H1 (cell line): ENCODE measurements at regions of chr20 and their contacts with region 1.

Region 1: DNA sequence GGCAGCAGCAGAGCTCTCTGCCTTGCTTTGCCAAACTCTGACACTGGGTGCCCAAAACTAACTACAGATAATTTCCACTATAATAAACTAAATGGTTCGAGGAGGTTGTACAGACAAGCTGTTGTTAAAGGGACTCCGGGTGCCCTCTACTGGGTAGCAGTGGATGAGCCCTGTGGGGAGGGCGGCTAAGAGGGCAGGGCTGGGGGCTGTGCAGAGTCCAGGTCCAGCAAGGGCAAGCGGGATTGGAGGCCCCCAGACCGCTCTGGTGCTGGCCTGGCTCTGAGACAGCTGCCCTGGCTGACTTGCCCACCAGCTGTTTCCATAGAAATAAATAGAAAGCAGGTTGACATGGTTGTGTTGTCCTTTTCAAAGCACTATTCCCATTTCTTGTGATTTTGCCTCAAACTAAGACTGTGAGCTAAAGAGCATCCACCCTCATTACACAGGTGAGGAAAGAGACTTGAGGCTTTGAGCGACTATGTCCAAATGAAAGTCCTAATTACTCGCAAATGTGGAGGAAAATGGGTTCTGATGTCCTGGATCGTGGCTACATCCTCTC is 167.6 kb upstream of the CST7 start:
- DNase-seq: peak in 1 of 2 experiments; percentile 55
- H3K4me3 ChIP-seq: no peak overlapping the region
- H3K27ac ChIP-seq: no peak overlapping the region
- H3K4me1 ChIP-seq: no peaks in the 10 kb centered on the region
- H3K27me3 ChIP-seq: no peaks in the 10 kb centered on the region
- CTCF ChIP-seq: peak; percentile 53 to 58 (median 57)
- EP300 ChIP-seq: no peak
- POLR2A ChIP-seq: no peak
- RAD21 ChIP-seq: peak; percentile 70 to 82

Region 2: GRCh38 chr20:24100385-24101011 is 681.0 kb before region 1 on chr20:
- CTCF ChIA-PET with region 1: interaction called, 10 read pairs
- POLR2A ChIA-PET with region 1: no interaction called
- DNase-seq: no peak
- H3K4me3 ChIP-seq: no peak overlapping the region
- H3K27ac ChIP-seq: no peak overlapping the region
- H3K4me1 ChIP-seq: no peaks in the 10 kb centered on the region
- H3K27me3 ChIP-seq: 0 out of 7 replicates have a peak, but pooled peaks cover 0 to 2% (median 0%) of the 10 kb centered on the region in 4 experiments
- CTCF ChIP-seq: peak; percentile 41 to 77 (median 66)
- EP300 ChIP-seq: no peak
- POLR2A ChIP-seq: no peak
- RAD21 ChIP-seq: peak; percentile 59 to 72

Region 3: DNA sequence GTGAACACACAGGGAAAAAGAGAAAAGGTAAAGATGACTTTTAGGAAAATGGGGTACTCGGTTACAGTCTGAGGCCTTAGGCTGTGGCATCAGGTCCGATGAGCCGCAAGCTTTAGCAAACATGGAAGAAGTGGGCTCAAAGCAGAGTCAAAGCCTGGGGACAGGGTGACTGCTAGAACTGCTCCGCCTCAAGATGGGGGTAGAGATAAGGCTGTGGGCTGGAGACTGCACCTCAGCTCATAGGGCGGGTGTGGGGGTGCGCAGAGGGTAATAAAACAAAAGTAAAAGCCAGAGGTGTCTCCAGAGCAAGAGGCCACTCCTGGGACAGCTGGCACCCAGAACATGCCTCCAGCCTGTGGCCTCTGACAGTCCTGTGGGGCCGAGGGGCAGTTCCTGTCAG is 333.3 kb before region 1 on chr20:
- CTCF ChIA-PET with region 1: interaction called, 13 read pairs
- POLR2A ChIA-PET with region 1: no interaction called
- DNase-seq: no peak
- H3K4me3 ChIP-seq: no peak overlapping the region
- H3K27ac ChIP-seq: no peak overlapping the region
- H3K4me1 ChIP-seq: peaks cover 8 to 24% (median 16%) of the 10 kb centered on the region in 4 experiments; a peak in 6 of 7 replicates
- H3K27me3 ChIP-seq: peaks cover 0 to 5% (median 0%) of the 10 kb centered on the region in 4 experiments; a peak in 2 of 7 replicates
- CTCF ChIP-seq: peak; percentile 33 to 52 (median 50)
- EP300 ChIP-seq: no peak
- POLR2A ChIP-seq: no peak
- RAD21 ChIP-seq: peak; percentile 59 to 70

Region 4: DNA sequence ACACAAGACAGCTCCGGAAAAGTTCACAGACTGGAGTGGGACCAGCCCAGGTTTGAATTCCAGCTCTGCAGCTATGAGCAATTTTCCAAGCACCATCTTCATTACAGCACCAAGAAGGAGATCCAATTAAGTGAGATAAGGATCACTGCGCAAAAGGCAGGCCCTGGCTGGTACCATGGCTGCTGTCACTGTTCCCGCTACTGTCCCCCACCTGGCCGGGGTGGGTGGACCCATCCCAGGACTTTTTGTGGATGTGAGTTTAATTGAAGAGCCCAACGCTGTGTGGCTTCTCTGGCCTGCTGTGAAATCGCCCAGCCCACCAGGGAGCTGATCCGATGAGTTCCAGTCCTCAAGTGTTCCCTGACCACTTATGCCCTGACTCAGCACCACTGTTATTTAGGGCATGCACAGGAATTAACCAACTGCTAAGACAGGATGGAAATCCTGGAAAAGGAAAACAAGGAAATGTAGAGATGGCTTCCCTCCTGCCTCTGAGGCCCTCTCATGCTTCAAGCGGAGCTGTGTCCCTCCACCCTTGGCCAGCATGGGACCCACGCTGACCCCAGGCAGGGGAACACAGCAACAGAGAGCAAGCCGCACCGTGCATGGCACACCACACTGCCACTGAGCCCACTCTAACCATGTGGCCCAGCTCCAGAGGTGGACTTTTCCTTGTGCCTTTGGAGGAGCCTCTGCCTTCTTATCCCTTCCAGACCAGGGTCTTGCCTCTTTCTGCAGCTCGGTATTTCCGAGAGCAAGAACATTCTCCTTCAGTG is 17.6 kb after region 1 on chr20:
- CTCF ChIA-PET with region 1: interaction called, 12 read pairs
- POLR2A ChIA-PET with region 1: no interaction called
- DNase-seq: no peak
- H3K4me3 ChIP-seq: no peak overlapping the region
- H3K27ac ChIP-seq: no peak overlapping the region
- H3K4me1 ChIP-seq: no peaks in the 10 kb centered on the region
- H3K27me3 ChIP-seq: no peaks in the 10 kb centered on the region
- CTCF ChIP-seq: no peak
- EP300 ChIP-seq: no peak
- POLR2A ChIP-seq: no peak
- RAD21 ChIP-seq: no peak

Region 5: GRCh38 chr20:24823989-24824693 is 42.6 kb after region 1 on chr20:
- CTCF ChIA-PET with region 1: no interaction called
- POLR2A ChIA-PET with region 1: no interaction called
- DNase-seq: no peak
- H3K4me3 ChIP-seq: no peak overlapping the region
- H3K27ac ChIP-seq: no peak overlapping the region
- H3K4me1 ChIP-seq: no peaks in the 10 kb centered on the region
- H3K27me3 ChIP-seq: no peaks in the 10 kb centered on the region
- CTCF ChIP-seq: no peak
- EP300 ChIP-seq: no peak
- POLR2A ChIP-seq: no peak
- RAD21 ChIP-seq: no peak

Region 6: GRCh38 chr20:24917797-24918578 is 136.5 kb after region 1 on chr20:
- CTCF ChIA-PET with region 1: interaction called, 64 read pairs
- POLR2A ChIA-PET with region 1: no interaction called
- DNase-seq: peak; percentile 67 to 88
- H3K4me3 ChIP-seq: no peak overlapping the region
- H3K27ac ChIP-seq: no peak overlapping the region
- H3K4me1 ChIP-seq: no peaks in the 10 kb centered on the region
- H3K27me3 ChIP-seq: no peaks in the 10 kb centered on the region; a peak in 1 of 7 replicates
- CTCF ChIP-seq: peak; percentile 84 to 91 (median 89)
- EP300 ChIP-seq: no peak
- POLR2A ChIP-seq: no peak
- RAD21 ChIP-seq: peak; percentile 96 to 97